Naive thymus-derived CD8-positive, alpha-beta T cell (primary cell): ENCODE measurements at regions of chr12 and their contacts with region 1.

Region 1: DNA sequence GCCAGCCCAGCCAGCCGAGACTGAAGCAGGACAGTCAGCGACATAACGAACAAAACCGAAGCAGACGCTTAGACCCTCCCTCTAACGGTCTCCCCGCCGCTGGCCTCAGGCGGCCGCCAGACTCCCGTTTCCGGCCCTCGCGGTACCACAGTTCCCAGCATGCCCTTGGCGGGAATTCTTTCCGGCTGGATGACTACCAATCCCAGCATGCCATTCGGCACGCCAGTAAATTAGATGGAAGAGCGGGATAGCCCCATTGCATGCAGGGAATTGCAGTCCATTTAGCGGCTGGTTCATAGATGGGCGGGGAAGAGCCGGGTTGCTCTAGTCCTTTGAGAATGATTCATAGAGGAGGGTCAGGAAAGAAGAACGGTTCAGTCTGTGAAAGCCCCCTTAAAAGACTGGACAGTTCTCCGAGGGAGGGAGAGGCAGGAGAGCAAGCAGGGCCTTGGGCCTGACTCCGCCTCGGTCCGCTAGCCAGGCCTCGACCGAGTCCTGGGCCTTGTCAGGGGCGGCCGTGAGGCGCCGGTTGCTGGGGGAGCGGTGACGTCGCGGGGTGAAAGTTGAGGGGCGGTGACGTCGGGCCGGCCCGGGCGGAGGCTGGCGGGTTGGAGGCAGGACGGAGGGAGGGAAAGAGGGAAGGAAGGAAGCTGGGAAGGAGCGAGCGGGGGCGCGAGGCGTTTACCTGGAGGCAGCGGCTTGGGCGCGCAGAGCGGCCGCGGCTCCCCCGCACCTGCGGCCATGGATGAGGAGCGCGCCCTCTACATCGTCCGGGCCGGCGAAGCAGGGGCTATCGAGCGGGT is at the start of gene RIC8B:
- DNase-seq: peak; percentile 59 to 86 (median 76)
- ATAC-seq: peak; percentile 82 to 86
- H3K4me3 Mint-ChIP-seq: peak within 1 kb of the TSS; percentile 90 to 100 (median 96)
- H3K27ac Mint-ChIP-seq: peak within 1 kb of the TSS; percentile 94 to 99 (median 97)
- H3K4me1 Mint-ChIP-seq: peaks cover 27 to 52% (median 43%) of the 10 kb centered on the region in 4 donors
- H3K27me3 Mint-ChIP-seq: peaks cover 0 to 5% (median 0%) of the 10 kb centered on the region in 5 donors
- polyA plus RNA-seq, gene RIC8B: 4.8 to 5.4 (median 5.2) TPM

Region 2: GRCh38 chr12:106369607-106370346 is 404.4 kb before region 1 on chr12:
- POLR2A ChIA-PET with region 1: no interaction called
- DNase-seq: no peak
- ATAC-seq: no peak
- H3K4me3 Mint-ChIP-seq: no peak overlapping the region
- H3K27ac Mint-ChIP-seq: no peak overlapping the region
- H3K4me1 Mint-ChIP-seq: no peaks in the 10 kb centered on the region
- H3K27me3 Mint-ChIP-seq: no peaks in the 10 kb centered on the region

Region 3: GRCh38 chr12:106736051-106736957 is 37.9 kb before region 1 on chr12:
- POLR2A ChIA-PET with region 1: no interaction called
- DNase-seq: peak in 4 of 10 donors; percentile 13 to 39 (median 25)
- ATAC-seq: peak; percentile 63 to 78
- H3K4me3 Mint-ChIP-seq: no peak overlapping the region
- H3K27ac Mint-ChIP-seq: peak overlapping the region in 1 of 10 donors; percentile 38
- H3K4me1 Mint-ChIP-seq: peaks cover 3 to 17% (median 7%) of the 10 kb centered on the region in 4 donors
- H3K27me3 Mint-ChIP-seq: peaks cover 0 to 10% (median 0%) of the 10 kb centered on the region in 5 donors

Region 4: DNA sequence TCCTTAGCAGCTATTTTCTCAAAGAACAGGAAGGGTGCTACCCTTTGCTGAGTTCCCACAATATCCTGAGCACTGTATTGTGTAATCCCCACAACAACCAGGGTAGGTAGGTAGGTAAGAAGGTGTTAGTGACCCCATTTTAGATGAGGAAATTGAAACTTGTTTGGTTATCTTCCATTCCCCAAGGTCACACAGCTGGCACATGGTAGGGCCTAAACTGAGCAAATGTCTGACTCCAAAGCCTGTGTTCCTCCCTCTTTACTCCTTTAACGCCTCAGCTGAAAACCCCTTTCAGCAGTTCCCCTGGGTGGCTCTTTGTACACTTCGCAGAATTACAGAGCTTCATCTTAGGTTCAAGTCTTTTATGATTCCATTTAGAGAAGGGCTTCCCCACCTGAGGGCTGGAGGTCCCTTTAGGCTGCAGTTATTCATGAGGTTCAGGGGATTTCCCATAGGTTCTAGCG is 26.2 kb before region 1 on chr12:
- POLR2A ChIA-PET with region 1: interaction called, 20 read pairs
- DNase-seq: peak in 9 of 10 donors; percentile 4 to 80 (median 40)
- ATAC-seq: peak; percentile 97 to 98
- H3K4me3 Mint-ChIP-seq: peak overlapping the region; percentile 34 to 79 (median 68)
- H3K27ac Mint-ChIP-seq: peak overlapping the region; percentile 80 to 97 (median 94)
- H3K4me1 Mint-ChIP-seq: peaks cover 22 to 38% (median 31%) of the 10 kb centered on the region in 4 donors
- H3K27me3 Mint-ChIP-seq: peaks cover 0 to 5% (median 0%) of the 10 kb centered on the region in 5 donors

Region 5: DNA sequence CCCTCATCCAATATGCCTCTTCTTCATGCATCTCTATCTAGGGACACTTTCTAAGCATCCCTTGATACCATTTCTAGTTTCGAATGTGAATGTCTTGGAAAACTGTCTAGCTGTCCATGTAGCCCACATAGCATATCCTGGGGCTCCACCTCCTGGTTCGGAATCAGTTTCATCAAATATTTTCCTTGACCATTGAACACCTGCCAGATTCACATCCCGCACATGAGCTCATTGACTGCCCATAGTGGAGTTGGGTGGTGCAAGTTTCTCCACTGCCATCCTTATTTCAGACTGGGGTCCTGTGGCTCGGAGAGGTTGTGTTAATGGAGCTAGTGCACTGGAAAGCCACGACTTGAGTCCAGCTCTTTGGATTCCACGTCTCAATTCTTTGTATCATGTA is 122.9 kb after region 1 on chr12:
- POLR2A ChIA-PET with region 1: no interaction called
- DNase-seq: no peak
- ATAC-seq: no peak
- H3K4me3 Mint-ChIP-seq: no peak overlapping the region
- H3K27ac Mint-ChIP-seq: peak overlapping the region in 2 of 10 donors; percentile 52 to 53
- H3K4me1 Mint-ChIP-seq: peaks cover 3 to 11% (median 4%) of the 10 kb centered on the region in 4 donors
- H3K27me3 Mint-ChIP-seq: peaks cover under 1 to 38% (median 3%) of the 10 kb centered on the region in 5 donors